Left ventricle myocardium inferior (tissue), 1 donor: ENCODE measurements at regions of chr11 and their contacts with region 1.

Region 1: GRCh38 chr11:120229451-120230424 is 10.2 kb upstream of the POU2F3 start:
- DNase-seq: no peak
- H3K4me3 ChIP-seq: no peak overlapping the region
- H3K27ac ChIP-seq: peak overlapping the region; percentile 42
- H3K4me1 ChIP-seq: peaks cover 26% of the 10 kb centered on the region
- H3K27me3 ChIP-seq: peaks cover 42% of the 10 kb centered on the region
- CTCF ChIP-seq: peak; percentile 86

Region 2: GRCh38 chr11:120128782-120129172 is 101.0 kb before region 1 on chr11:
- intact Hi-C with region 1: no loop called
- DNase-seq: peak; percentile 7
- H3K4me3 ChIP-seq: no peak overlapping the region
- H3K27ac ChIP-seq: no peak overlapping the region
- H3K4me1 ChIP-seq: no peaks in the 10 kb centered on the region
- H3K27me3 ChIP-seq: peaks cover 23% of the 10 kb centered on the region
- CTCF ChIP-seq: no peak

Region 3: DNA sequence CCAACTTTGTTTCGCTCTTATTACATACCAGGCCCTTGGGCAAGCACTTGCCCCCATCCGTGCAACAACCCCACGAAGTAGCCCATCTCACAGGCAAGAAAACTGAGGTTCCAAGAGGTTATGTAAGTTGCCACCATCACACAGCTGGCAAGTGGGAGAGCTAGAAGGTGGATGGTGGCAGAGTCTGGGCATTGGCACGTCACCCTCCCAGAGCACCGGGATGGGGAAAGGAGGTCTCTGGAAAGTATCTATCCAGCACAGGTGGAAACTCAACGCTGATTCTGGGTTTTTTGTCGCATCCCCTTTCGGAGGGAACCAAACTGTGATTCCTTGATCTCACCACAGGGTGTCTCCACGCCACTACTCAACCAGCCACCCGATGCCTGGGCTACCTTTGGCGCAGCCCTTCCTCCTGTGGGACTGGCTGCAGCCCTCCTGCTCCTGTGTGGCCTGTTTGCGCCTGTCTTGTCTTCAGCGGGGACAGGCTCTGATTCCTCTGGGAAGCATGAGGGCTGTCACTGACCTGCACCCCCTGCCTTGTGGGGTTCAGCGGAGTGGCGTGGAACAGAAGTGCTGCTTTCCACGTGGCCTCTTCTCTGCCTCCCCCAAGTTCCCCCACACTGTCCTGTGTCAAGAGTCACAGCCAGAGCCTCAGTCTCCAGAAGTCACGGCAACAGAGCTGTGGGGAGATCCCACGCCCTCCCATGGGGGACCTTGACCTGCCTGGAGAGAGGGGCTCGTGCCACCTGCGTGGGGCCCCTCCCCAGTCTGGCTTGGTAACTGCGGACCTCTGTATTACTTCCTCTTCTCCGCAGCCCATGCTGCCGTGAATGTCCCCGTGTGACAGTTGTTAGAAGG is 57.5 kb before region 1 on chr11:
- intact Hi-C with region 1: loop called (anchors 2 kb)
- DNase-seq: peak; percentile 64
- H3K4me3 ChIP-seq: no peak overlapping the region
- H3K27ac ChIP-seq: no peak overlapping the region
- H3K4me1 ChIP-seq: peaks cover 21% of the 10 kb centered on the region
- H3K27me3 ChIP-seq: peaks cover 91% of the 10 kb centered on the region
- CTCF ChIP-seq: peak; percentile 92